CD4-positive, alpha-beta memory T cell (primary cell): ENCODE measurements at regions of chr3 and their contacts with region 1.

Region 1: GRCh38 chr3:109806929-109807328 is 469.6 kb upstream of the DPPA4 start:
- DNase-seq: peak; percentile 72 to 83 (median 80)
- H3K4me3 ChIP-seq: no peak overlapping the region
- H3K4me3 Mint-ChIP-seq: peak overlapping the region; percentile 72 to 88 (median 79)
- H3K27ac ChIP-seq: peak overlapping the region; percentile 40
- H3K27ac Mint-ChIP-seq: peak overlapping the region; percentile 83 to 97 (median 90)
- H3K4me1 ChIP-seq: peaks cover 49% of the 10 kb centered on the region
- H3K4me1 Mint-ChIP-seq: peaks cover 40 to 65% (median 52%) of the 10 kb centered on the region in 4 donors
- H3K27me3 ChIP-seq: no peaks in the 10 kb centered on the region
- H3K27me3 Mint-ChIP-seq: no peaks in the 10 kb centered on the region

Region 2: DNA sequence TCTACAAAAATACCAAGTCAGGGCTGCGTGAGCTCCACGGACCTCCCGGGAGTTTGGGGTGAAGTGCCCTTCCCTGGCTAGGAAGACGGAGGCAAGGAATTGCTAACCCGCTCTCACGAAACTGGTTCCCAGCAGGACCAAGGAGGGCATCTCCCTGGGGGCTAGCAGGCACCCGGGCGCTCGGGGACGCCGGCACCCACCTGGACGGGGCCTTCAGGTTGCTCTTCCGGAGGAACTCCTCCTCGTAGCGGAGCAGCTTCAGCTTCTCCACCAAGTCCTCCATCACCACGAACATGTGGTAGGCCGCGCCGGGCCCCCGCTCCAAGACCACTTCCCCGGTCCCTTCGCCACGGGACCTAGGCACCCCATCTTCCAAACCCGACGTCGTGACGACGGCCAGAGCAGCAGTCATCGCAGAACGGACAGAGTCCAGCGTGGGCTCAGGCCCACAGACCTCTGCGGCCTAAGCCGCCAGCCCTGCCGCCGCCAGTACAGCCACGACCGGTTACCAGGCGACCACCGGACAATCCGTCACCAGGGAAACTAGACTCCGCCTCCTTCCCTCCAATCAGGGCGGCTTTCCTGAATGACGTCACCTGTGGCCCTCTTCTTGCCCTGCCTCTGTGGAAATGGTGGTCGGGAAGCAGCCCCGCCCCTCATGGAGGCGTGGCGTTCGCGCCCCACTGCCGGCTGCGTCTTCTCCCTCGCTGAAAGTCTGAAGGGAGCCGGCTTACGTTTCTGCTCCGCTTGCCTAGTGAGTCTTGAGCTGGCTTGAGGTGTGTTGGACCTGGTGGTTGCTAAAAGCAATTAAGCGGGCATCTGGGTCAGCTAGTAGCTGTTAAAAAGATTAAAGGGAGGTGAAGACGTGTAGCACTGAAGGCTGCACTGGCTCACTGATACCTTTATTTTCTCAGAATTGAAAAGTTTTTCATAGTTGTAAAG is 1584.7 kb before region 1 on chr3 and contains the start of gene IFT57:
- CTCF ChIA-PET with region 1: no interaction called
- POLR2A ChIA-PET with region 1: no interaction called
- intact Hi-C with region 1: loop called (anchors 5 kb)
- DNase-seq: peak; percentile 96 to 97 (median 97)
- H3K4me3 ChIP-seq: peak within 1 kb of the TSS; percentile 66 to 91
- H3K4me3 Mint-ChIP-seq: peak within 1 kb of the TSS; percentile 95 to 99 (median 98)
- H3K27ac ChIP-seq: peak within 1 kb of the TSS; percentile 95
- H3K27ac Mint-ChIP-seq: peak within 1 kb of the TSS; percentile 100
- H3K4me1 ChIP-seq: peaks cover 49% of the 10 kb centered on the region
- H3K4me1 Mint-ChIP-seq: peaks cover 37 to 57% (median 47%) of the 10 kb centered on the region in 4 donors
- H3K27me3 ChIP-seq: no peaks in the 10 kb centered on the region
- H3K27me3 Mint-ChIP-seq: peaks cover 0 to 1% of the 10 kb centered on the region in 2 donors
- total RNA-seq, gene IFT57: 24.1 to 26.1 TPM

Region 3: DNA sequence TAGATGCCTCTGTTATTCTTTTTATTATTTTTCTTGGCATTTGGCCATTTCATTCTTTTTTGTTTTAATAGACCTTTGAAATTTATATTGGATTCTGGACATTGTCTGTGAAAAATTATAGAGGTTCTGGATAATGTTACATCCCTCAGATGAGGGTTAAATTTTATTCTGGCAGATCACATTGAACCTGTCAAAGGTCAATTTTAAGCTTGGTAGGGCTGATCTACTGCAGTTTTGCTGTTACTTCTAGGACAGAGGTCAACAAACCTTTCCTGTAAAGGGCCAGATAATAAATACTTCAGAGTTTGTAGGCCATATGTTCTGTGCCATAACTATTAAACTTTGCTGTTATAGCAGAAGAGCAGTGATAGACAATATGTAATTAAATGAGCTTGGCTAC is 150.7 kb before region 1 on chr3:
- CTCF ChIA-PET with region 1: no interaction called
- POLR2A ChIA-PET with region 1: no interaction called
- intact Hi-C with region 1: no loop called
- DNase-seq: no peak
- H3K4me3 ChIP-seq: no peak overlapping the region
- H3K4me3 Mint-ChIP-seq: no peak overlapping the region
- H3K27ac ChIP-seq: no peak overlapping the region
- H3K27ac Mint-ChIP-seq: no peak overlapping the region
- H3K4me1 ChIP-seq: no peaks in the 10 kb centered on the region
- H3K4me1 Mint-ChIP-seq: no peaks in the 10 kb centered on the region
- H3K27me3 ChIP-seq: no peaks in the 10 kb centered on the region
- H3K27me3 Mint-ChIP-seq: peaks cover 0 to 1% of the 10 kb centered on the region in 2 donors

Region 4: DNA sequence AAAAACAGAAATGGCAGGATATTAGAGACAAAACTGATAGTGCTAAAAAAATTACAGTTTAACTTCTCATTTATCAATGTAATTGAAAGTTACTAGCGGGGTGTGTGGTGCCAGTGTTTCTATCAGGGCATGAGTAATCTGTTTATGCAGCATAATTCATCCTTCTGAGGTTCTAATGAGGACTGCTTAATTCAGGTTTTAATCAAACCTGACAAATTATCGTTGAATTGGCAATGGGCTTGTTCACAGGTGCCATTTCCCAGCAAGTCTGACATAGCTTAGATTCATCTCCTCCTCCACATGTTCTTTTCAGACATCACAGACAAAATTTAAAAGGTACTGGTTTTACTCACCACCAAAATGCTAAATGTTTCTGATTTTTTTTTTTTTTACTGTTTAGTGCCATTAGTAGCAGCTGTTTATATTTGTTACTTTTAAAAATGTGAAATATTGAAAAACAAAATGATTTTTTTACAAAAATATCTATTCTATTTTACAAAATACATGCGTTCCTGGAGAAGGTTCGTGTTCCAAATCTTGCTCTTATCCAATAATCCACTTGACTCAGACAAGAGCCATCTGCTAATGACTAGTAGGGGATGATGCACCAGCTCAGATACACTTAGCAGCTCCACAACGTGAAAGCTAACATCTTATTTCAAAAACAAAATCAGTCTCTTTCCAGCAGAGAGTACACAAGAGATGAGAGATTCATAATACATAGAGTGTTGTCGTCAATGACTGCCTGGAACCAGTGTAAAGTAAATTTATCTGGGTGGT is 21.9 kb before region 1 on chr3:
- CTCF ChIA-PET with region 1: interaction called, 3 read pairs
- POLR2A ChIA-PET with region 1: interaction called, 6 read pairs
- intact Hi-C with region 1: loop called (anchors 2 kb)
- DNase-seq: no peak
- H3K4me3 ChIP-seq: no peak overlapping the region
- H3K4me3 Mint-ChIP-seq: no peak overlapping the region
- H3K27ac ChIP-seq: no peak overlapping the region
- H3K27ac Mint-ChIP-seq: peak overlapping the region in 1 of 7 donors; percentile 55
- H3K4me1 ChIP-seq: no peaks in the 10 kb centered on the region
- H3K4me1 Mint-ChIP-seq: peaks cover 2 to 11% (median 8%) of the 10 kb centered on the region in 4 donors
- H3K27me3 ChIP-seq: no peaks in the 10 kb centered on the region
- H3K27me3 Mint-ChIP-seq: no peaks in the 10 kb centered on the region

Region 5: GRCh38 chr3:109853077-109853731 is 46.3 kb after region 1 on chr3:
- CTCF ChIA-PET with region 1: interaction called, 3 read pairs
- POLR2A ChIA-PET with region 1: interaction called, 8 read pairs
- intact Hi-C with region 1: loop called (anchors 5 kb)
- DNase-seq: no peak
- H3K4me3 ChIP-seq: no peak overlapping the region
- H3K4me3 Mint-ChIP-seq: peak overlapping the region in 6 of 8 donors; percentile 11 to 83 (median 42)
- H3K27ac ChIP-seq: no peak overlapping the region
- H3K27ac Mint-ChIP-seq: peak overlapping the region in 2 of 7 donors; percentile 47 to 77
- H3K4me1 ChIP-seq: peaks cover 14% of the 10 kb centered on the region
- H3K4me1 Mint-ChIP-seq: peaks cover 17 to 21% (median 19%) of the 10 kb centered on the region in 4 donors
- H3K27me3 ChIP-seq: no peaks in the 10 kb centered on the region
- H3K27me3 Mint-ChIP-seq: no peaks in the 10 kb centered on the region

Region 6: DNA sequence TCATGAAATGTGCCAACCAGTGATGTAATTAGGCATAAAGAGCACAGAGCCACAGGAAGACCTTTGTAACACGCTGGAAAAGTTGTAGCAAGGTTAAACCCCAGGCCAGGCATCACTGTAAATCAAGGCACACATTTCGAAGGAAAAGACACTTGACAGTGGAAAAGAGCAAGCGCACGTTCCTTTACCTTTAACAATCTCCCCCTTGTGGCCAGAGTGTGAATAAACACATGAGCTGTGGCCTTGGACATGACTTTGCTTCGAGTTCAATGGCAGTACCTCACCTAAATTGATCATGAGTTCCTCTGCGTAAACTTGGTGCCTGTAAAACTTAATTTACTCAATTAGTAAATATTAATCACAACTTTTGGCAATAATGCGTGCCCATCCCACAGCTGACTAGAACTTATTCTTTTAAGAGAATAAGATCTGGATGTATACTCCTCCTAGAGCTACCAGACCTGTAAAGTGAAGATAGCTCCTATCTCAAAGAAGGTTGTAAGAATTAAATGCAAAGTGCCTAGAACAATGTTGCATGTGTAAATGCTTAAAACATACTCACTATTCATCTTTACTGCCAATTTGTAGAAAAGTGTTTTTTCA is 507.7 kb after region 1 on chr3:
- CTCF ChIA-PET with region 1: interaction called, 6 read pairs
- POLR2A ChIA-PET with region 1: no interaction called
- intact Hi-C with region 1: loop called (anchors 2 kb)
- DNase-seq: peak; percentile 55 to 67 (median 63)
- H3K4me3 ChIP-seq: no peak overlapping the region
- H3K4me3 Mint-ChIP-seq: peak overlapping the region in 1 of 8 donors; percentile 0
- H3K27ac ChIP-seq: no peak overlapping the region
- H3K27ac Mint-ChIP-seq: no peak overlapping the region
- H3K4me1 ChIP-seq: no peaks in the 10 kb centered on the region
- H3K4me1 Mint-ChIP-seq: peaks cover 0 to 7% (median 4%) of the 10 kb centered on the region in 4 donors
- H3K27me3 ChIP-seq: no peaks in the 10 kb centered on the region
- H3K27me3 Mint-ChIP-seq: peaks cover 0 to under 1% of the 10 kb centered on the region in 2 donors

Region 7: GRCh38 chr3:110526777-110527727 is 720.1 kb after region 1 on chr3:
- CTCF ChIA-PET with region 1: no interaction called
- POLR2A ChIA-PET with region 1: no interaction called
- intact Hi-C with region 1: no loop called
- DNase-seq: no peak
- H3K4me3 ChIP-seq: no peak overlapping the region
- H3K4me3 Mint-ChIP-seq: no peak overlapping the region
- H3K27ac ChIP-seq: no peak overlapping the region
- H3K27ac Mint-ChIP-seq: no peak overlapping the region
- H3K4me1 ChIP-seq: no peaks in the 10 kb centered on the region
- H3K4me1 Mint-ChIP-seq: no peaks in the 10 kb centered on the region
- H3K27me3 ChIP-seq: no peaks in the 10 kb centered on the region
- H3K27me3 Mint-ChIP-seq: peaks cover 1 to 3% of the 10 kb centered on the region in 2 donors

Region 8: GRCh38 chr3:111539351-111540331 is 1732.7 kb after region 1 on chr3:
- CTCF ChIA-PET with region 1: interaction called, 4 read pairs
- POLR2A ChIA-PET with region 1: interaction called, 3 read pairs
- intact Hi-C with region 1: loop called (anchors 1 kb)
- DNase-seq: peak; percentile 51 to 67 (median 58)
- H3K4me3 ChIP-seq: peak overlapping the region; percentile 46 to 63
- H3K4me3 Mint-ChIP-seq: peak overlapping the region; percentile 65 to 87 (median 84)
- H3K27ac ChIP-seq: peak overlapping the region; percentile 33
- H3K27ac Mint-ChIP-seq: peak overlapping the region in 6 of 7 donors; percentile 51 to 96 (median 86)
- H3K4me1 ChIP-seq: peaks cover 51% of the 10 kb centered on the region
- H3K4me1 Mint-ChIP-seq: peaks cover 8 to 68% (median 41%) of the 10 kb centered on the region in 4 donors
- H3K27me3 ChIP-seq: no peaks in the 10 kb centered on the region
- H3K27me3 Mint-ChIP-seq: no peaks in the 10 kb centered on the region